ENCODE measurements at regions of chr4 and their contacts with region 1.

Region 1: GRCh38 chr4:74932816-74933561 is at the start of gene PARM1:
- DNase-seq: peak; percentile 90 to 92
- ATAC-seq: peak; percentile 91 to 99 (median 95)
- H3K4me3 ChIP-seq: peak within 1 kb of the TSS; percentile 54 to 77 (median 71)
- H3K27ac ChIP-seq: peak within 1 kb of the TSS; percentile 8 to 84 (median 69)
- H3K4me1 ChIP-seq: peaks cover 0 to 26% (median 10%) of the 10 kb centered on the region in 9 donors
- H3K27me3 ChIP-seq: peaks cover 0 to 50% (median 0%) of the 10 kb centered on the region in 7 donors
- CTCF ChIP-seq: peak; percentile 54 to 84 (median 73)
- total RNA-seq, gene PARM1: 34.2 to 119 (median 80.9) TPM

Region 2: GRCh38 chr4:74855879-74856278 is 77.1 kb before region 1 on chr4:
- intact Hi-C with region 1: no loop called
- DNase-seq: no peak
- ATAC-seq: no peak
- H3K4me3 ChIP-seq: no peak overlapping the region
- H3K27ac ChIP-seq: no peak overlapping the region
- H3K4me1 ChIP-seq: no peaks in the 10 kb centered on the region
- H3K27me3 ChIP-seq: no peaks in the 10 kb centered on the region
- CTCF ChIP-seq: no peak

Region 3: GRCh38 chr4:74969507-74970474 is 36.8 kb after region 1 on chr4:
- intact Hi-C with region 1: loop called in 1 of 10 experiments (anchors 5 kb)
- DNase-seq: peak; percentile 19 to 69
- ATAC-seq: peak; percentile 82 to 95 (median 90)
- H3K4me3 ChIP-seq: no peak overlapping the region
- H3K27ac ChIP-seq: peak overlapping the region; percentile 37 to 82 (median 66)
- H3K4me1 ChIP-seq: peaks cover 0 to 60% (median 23%) of the 10 kb centered on the region in 9 donors
- H3K27me3 ChIP-seq: no peaks in the 10 kb centered on the region
- CTCF ChIP-seq: peak; percentile 8 to 58 (median 41)

Region 4: DNA sequence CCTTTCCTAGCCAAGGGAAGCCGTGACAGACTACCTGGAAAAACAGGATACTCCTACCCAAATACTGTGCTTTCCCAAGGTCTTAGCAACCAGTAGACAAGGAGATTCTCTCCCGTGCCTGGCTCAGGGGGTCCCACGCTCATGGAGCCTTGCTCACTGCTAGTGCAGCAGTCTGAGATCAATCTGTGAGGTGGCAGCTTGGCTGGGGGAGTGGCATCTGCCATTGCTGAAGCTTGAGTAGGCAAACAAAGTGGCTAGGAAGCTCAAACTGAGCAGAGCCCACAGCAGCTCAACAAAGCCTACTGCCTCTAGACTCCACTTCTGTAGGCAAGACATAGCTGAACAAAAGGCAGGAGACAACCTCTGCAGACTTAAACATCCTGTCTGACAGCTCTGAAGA is 177.1 kb after region 1 on chr4:
- intact Hi-C with region 1: loop called in 5 of 10 experiments (anchors 2 to 5 kb)
- DNase-seq: no peak
- ATAC-seq: no peak
- H3K4me3 ChIP-seq: no peak overlapping the region
- H3K27ac ChIP-seq: no peak overlapping the region
- H3K4me1 ChIP-seq: no peaks in the 10 kb centered on the region
- H3K27me3 ChIP-seq: no peaks in the 10 kb centered on the region
- CTCF ChIP-seq: no peak

Region 5: GRCh38 chr4:75289914-75290582 is 357.1 kb after region 1 on chr4:
- intact Hi-C with region 1: loop called in 1 of 10 experiments (anchors 10 kb)
- DNase-seq: no peak
- ATAC-seq: peak in 1 of 8 donors; percentile 33
- H3K4me3 ChIP-seq: no peak overlapping the region
- H3K27ac ChIP-seq: no peak overlapping the region
- H3K4me1 ChIP-seq: no peaks in the 10 kb centered on the region
- H3K27me3 ChIP-seq: no peaks in the 10 kb centered on the region
- CTCF ChIP-seq: peak in 7 of 9 donors; percentile 17 to 42 (median 33)

Region 6: GRCh38 chr4:75469896-75470295 is 536.9 kb after region 1 on chr4:
- intact Hi-C with region 1: loop called in 4 of 10 experiments (anchors 2 to 10 kb)
- DNase-seq: no peak
- ATAC-seq: no peak
- H3K4me3 ChIP-seq: no peak overlapping the region
- H3K27ac ChIP-seq: no peak overlapping the region
- H3K4me1 ChIP-seq: peaks cover 0 to 8% (median 0%) of the 10 kb centered on the region in 9 donors
- H3K27me3 ChIP-seq: no peaks in the 10 kb centered on the region
- CTCF ChIP-seq: no peak

Region 7: DNA sequence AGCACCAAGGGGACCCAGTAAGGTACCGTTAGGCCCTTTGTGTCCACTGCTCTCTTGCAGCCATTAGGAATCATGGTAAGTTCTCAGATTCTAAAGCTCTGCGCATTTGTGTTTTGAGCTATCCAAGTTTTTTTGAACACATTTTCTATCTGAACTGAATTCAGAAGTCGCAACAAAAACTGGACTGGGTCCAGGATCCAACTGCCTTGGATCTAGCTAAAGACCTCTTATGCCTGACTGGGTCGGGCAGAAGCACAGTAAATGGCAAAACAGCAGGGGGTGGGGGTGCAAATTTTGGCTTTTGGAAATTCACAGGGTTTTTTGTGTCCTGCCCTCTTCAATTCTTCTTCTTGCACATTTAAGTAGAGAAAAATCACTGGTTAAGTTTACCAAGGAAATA is 551.2 kb after region 1 on chr4:
- intact Hi-C with region 1: loop called in 2 of 10 experiments (anchors 10 kb)
- DNase-seq: no peak
- ATAC-seq: no peak
- H3K4me3 ChIP-seq: no peak overlapping the region
- H3K27ac ChIP-seq: no peak overlapping the region
- H3K4me1 ChIP-seq: no peaks in the 10 kb centered on the region
- H3K27me3 ChIP-seq: no peaks in the 10 kb centered on the region
- CTCF ChIP-seq: no peak

Region 8: DNA sequence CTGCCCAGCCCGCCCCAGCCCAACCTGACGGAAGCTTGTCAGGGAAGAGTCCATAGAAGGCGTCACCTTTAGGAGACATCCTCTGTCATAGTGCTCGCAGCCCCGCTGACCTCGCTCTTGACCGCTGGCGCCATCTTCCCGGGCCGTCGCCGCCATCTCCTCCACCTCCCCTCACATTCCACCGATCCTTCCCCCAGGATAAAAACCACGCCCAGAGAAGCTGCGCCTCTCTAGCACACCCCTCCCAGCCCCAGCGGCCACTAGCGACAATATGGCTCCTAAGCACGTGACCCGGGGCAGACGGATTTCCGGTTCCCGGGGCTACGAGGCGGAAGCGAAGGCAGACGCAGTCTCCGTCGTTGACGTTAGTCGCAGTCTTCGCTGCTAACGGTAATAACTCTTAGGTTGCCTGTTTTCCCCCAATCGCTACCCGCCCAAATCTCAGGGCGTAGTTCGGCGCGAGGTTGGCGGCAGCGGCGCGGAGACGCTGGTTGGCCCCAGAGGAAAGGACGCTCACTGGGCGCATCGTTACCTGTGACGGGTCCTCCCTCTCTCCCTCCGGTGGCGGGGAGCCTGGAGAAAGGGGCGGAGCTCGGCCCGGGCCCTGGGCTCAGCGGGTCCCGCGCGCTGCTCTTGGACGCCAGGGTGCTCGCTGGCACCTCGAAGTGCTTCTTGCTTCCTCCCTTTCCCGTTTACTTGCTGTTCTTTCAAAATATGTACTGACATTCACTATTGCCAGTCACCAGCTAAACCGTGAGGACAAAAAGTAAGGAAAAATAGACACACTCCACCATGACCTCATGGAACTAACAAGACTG is 581.4 kb after region 1 on chr4 and contains the starts of genes RCHY1 and THAP6:
- intact Hi-C with region 1: loop called in 1 of 10 experiments (anchors 10 kb)
- DNase-seq: peak; percentile 94 to 97
- ATAC-seq: peak; percentile 98 to 99 (median 98)
- H3K4me3 ChIP-seq: peak within 1 kb of the TSS; percentile 64 to 77 (median 72)
- H3K27ac ChIP-seq: peak within 1 kb of the TSS; percentile 80 to 97 (median 94)
- H3K4me1 ChIP-seq: peaks cover 0 to 60% (median 52%) of the 10 kb centered on the region in 9 donors
- H3K27me3 ChIP-seq: no peaks in the 10 kb centered on the region
- CTCF ChIP-seq: peak in 2 of 9 donors; percentile 1 to 36
- total RNA-seq, gene RCHY1: 37.4 to 62.0 (median 50.3) TPM
- total RNA-seq, gene THAP6: 13.0 to 21.7 (median 18.3) TPM

Measured in heart right ventricle (tissue), 16 donors.